Activated B cell treated with CpG ODN at 0.5 μM for 24 hours (primary cell): ENCODE measurements at regions of chr3 and their contacts with region 1.

Region 1: GRCh38 chr3:89966877-89967665 is 859.6 kb downstream of the EPHA3 start:
- DNase-seq: no peak
- ATAC-seq: no peak
- H3K4me3 Mint-ChIP-seq: no peak overlapping the region
- H3K27ac Mint-ChIP-seq: no peak overlapping the region
- H3K4me1 Mint-ChIP-seq: no peaks in the 10 kb centered on the region
- H3K27me3 Mint-ChIP-seq: no peaks in the 10 kb centered on the region
- CTCF ChIP-seq: no peak

Region 2: DNA sequence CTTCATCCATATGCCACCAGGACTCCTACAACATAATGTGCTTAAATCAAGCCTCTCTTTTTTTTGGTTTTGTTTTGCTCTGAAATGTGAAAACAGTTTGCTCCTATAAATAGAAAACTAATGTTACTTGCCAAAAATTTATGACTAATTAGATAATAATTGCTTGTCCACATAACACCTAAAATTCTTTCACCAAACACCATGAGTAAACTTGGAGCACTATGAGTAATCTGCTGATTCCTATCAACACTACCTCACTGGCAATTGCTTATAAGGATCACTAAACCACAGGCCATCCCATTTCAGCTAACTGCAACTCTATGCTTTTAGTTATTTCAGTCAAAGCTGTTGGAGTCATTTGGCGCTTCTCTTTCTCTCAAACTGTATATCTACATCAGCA is 606.9 kb before region 1 on chr3:
- CTCF ChIA-PET with region 1: no interaction called
- POLR2A ChIA-PET with region 1: no interaction called
- intact Hi-C with region 1: no loop called
- DNase-seq: no peak
- ATAC-seq: no peak
- H3K4me3 Mint-ChIP-seq: no peak overlapping the region
- H3K27ac Mint-ChIP-seq: no peak overlapping the region
- H3K4me1 Mint-ChIP-seq: no peaks in the 10 kb centered on the region
- H3K27me3 Mint-ChIP-seq: no peaks in the 10 kb centered on the region
- CTCF ChIP-seq: no peak

Region 3: DNA sequence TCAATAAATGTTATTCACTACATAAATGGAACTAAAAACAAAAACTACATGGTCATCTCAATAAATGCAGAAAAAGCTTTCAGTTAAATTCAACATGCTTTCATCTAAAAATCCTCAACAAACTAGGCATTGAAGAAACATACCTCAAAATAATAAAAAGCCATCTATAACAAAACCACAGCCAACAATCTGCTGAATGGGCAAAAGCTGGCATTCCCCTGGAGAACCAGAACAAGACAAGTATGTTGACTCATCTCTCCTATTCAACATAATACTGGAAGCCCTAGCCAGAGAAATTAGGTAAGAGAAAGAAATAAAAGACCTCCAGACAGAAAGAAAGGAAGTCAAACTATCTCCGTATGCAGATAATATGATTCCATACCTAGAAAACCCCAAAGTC is 99.8 kb before region 1 on chr3:
- CTCF ChIA-PET with region 1: no interaction called
- POLR2A ChIA-PET with region 1: no interaction called
- intact Hi-C with region 1: no loop called
- DNase-seq: no peak
- ATAC-seq: no peak
- H3K4me3 Mint-ChIP-seq: no peak overlapping the region
- H3K27ac Mint-ChIP-seq: no peak overlapping the region
- H3K4me1 Mint-ChIP-seq: no peaks in the 10 kb centered on the region
- H3K27me3 Mint-ChIP-seq: no peaks in the 10 kb centered on the region
- CTCF ChIP-seq: no peak

Region 4: DNA sequence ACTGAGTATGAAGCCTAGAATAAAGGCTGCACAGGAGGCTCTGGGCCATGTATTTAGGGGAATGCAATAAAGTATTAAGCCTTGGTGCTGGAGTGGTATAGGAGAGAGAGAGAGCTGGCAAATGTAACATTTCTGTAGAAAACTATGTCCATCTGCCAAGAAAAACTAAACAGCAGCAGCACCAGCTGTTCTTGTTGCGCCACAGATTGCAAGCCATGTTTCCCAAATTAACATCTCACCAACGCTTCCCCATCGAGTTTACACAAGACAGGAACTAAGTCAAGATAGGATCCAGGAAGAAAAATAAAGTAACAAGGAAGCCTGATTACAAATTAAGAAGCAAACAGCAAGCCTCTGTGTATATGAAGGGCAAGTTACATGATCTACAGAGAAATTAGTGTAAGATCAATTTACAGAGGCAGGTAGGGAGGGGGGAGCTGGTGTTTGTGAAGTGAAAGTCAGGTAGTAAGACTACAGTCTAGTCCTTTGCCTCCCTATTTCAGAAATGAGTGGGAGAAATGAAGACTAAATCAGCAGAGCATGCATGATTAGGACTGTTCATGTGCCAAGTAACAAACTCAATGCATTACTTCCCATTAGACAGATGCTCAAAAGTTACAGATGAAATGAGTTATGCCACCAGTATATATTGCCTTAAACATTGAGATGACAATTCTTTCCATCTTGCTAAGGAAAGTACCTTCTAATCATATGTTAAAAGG is 40.9 kb after region 1 on chr3:
- CTCF ChIA-PET with region 1: no interaction called
- POLR2A ChIA-PET with region 1: no interaction called
- intact Hi-C with region 1: loop called (anchors 1 kb)
- DNase-seq: no peak
- ATAC-seq: no peak
- H3K4me3 Mint-ChIP-seq: no peak overlapping the region
- H3K27ac Mint-ChIP-seq: no peak overlapping the region
- H3K4me1 Mint-ChIP-seq: no peaks in the 10 kb centered on the region
- H3K27me3 Mint-ChIP-seq: no peaks in the 10 kb centered on the region
- CTCF ChIP-seq: no peak